T-cell (primary cell): ENCODE measurements at regions of chr14 and their contacts with region 1.

Region 1: GRCh38 chr14:49677643-49678042 is 10.4 kb downstream of the POLE2 start:
- DNase-seq: no peak
- ATAC-seq: no peak
- H3K4me3 ChIP-seq: no peak overlapping the region
- H3K4me3 Mint-ChIP-seq: no peak overlapping the region
- H3K27ac ChIP-seq: no peak overlapping the region
- H3K27ac Mint-ChIP-seq: no peak overlapping the region
- H3K4me1 ChIP-seq: no peaks in the 10 kb centered on the region
- H3K4me1 Mint-ChIP-seq: no peaks in the 10 kb centered on the region
- H3K27me3 ChIP-seq: no peaks in the 10 kb centered on the region
- H3K27me3 Mint-ChIP-seq: no peaks in the 10 kb centered on the region

Region 2: GRCh38 chr14:49560374-49560768 is 117.3 kb before region 1 on chr14:
- CTCF ChIA-PET with region 1: no interaction called
- POLR2A ChIA-PET with region 1: interaction called in 1 of 2 experiments, 12 read pairs
- DNase-seq: no peak
- ATAC-seq: no peak
- H3K4me3 ChIP-seq: no peak overlapping the region
- H3K4me3 Mint-ChIP-seq: no peak overlapping the region
- H3K27ac ChIP-seq: no peak overlapping the region
- H3K27ac Mint-ChIP-seq: no peak overlapping the region
- H3K4me1 ChIP-seq: no peaks in the 10 kb centered on the region
- H3K4me1 Mint-ChIP-seq: no peaks in the 10 kb centered on the region
- H3K27me3 ChIP-seq: peaks cover 0 to 2% of the 10 kb centered on the region in 2 experiments
- H3K27me3 Mint-ChIP-seq: peaks cover 3 to 4% of the 10 kb centered on the region in 2 donors